ENCODE measurements at regions of chr6 and their contacts with region 1.

Region 1: DNA sequence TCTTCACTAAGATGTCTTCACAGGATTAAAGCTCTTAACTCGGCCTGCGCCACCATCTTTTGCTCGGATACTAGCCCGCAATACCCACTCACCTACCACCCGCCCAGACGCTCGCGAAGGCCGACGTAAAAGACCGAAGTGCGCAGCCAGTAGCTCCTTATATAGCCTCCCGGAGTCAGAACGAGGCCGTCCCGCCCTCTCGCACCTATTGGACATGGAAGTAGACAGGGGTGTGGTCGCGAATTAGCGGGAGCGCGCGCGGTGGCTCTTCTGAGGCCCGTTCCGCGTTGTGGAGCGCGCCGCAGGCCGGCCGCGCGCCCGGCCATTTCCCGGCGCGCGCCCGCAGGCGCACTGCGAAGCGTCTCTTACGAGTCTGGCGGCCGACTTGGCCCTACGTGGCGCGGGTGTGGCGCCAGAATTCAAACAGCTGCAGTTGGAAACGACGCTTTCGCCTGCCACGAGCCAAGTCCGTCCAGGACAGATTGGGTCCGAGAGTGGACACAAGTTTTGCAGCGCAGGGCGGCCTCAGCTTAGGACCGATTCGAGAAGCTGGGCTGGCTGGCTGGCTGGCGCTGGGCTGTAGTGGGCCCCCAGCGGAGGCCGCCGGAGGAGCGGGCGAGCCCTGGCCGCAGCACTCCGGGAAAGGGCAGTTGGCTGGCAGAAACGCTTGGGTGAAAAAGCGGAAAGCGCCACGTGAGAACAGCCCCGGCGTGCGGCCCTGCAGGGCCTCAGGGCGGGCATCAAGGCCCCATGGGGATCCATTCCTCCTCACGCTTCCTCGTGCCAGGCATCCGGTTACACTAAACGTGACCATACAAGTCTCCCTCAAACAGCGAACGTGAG is 36.1 kb upstream of the SYNCRIP start:
- DNase-seq: peak; percentile 97 to 100 (median 98)
- ATAC-seq: peak; percentile 87
- H3K4me3 ChIP-seq: peak overlapping the region; percentile 72
- H3K4me3 Mint-ChIP-seq: peak overlapping the region; percentile 98
- H3K27ac ChIP-seq: peak overlapping the region; percentile 90 to 94
- H3K27ac Mint-ChIP-seq: peak overlapping the region; percentile 97
- H3K4me1 ChIP-seq: peaks cover 20% of the 10 kb centered on the region
- H3K4me1 Mint-ChIP-seq: peaks cover 51% of the 10 kb centered on the region
- H3K27me3 ChIP-seq: no peaks in the 10 kb centered on the region
- H3K27me3 Mint-ChIP-seq: no peaks in the 10 kb centered on the region
- CTCF ChIP-seq: no peak

Region 2: GRCh38 chr6:85354761-85355618 is 323.8 kb before region 1 on chr6:
- CTCF ChIA-PET with region 1: no interaction called
- POLR2A ChIA-PET with region 1: no interaction called
- intact Hi-C with region 1: loop called in 1 of 2 experiments (anchors 10 kb)
- DNase-seq: peak; percentile 12 to 64 (median 35)
- ATAC-seq: peak; percentile 49
- H3K4me3 ChIP-seq: no peak overlapping the region
- H3K4me3 Mint-ChIP-seq: no peak overlapping the region
- H3K27ac ChIP-seq: no peak overlapping the region
- H3K27ac Mint-ChIP-seq: no peak overlapping the region
- H3K4me1 ChIP-seq: no peaks in the 10 kb centered on the region
- H3K4me1 Mint-ChIP-seq: no peaks in the 10 kb centered on the region
- H3K27me3 ChIP-seq: no peaks in the 10 kb centered on the region
- H3K27me3 Mint-ChIP-seq: no peaks in the 10 kb centered on the region
- CTCF ChIP-seq: peak; percentile 96

Region 3: DNA sequence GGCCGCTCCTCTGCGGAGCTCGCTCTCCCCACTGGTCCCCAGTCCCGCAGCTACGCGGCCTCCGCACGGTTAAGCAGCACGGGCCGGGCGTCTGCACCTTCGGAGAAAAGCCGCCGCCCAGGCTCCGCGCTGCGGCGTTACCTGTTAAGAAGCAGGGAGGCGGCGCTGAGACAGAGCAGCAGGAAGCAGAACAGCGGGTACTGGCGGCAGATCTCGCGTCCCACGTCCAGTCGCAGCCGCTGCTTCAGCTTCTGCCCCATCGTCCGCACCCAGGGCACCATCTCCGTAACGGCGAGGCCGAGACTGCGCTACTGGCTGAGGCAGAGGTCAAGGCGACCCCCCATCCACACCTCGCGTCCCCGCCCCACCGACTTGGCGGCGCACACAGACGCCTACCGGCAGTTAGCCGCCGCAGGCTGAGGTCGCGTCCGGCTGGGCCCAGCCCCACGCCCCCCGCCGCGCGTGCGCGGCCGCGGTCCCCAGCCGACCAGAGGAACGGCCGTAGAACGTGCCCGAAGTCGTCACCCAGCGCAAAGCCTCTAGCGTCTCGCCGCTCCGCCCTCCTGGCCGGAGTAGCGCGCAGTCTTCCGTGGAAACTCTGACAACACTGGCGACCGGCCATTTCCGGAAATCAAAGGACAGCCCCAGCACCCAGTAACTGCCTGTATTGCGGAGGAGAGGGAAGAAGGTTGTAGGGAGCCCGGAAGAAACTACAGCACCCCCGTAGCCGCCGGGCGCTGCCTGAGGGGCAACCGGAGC is 85.2 kb before region 1 on chr6 and contains the start of gene SNX14:
- CTCF ChIA-PET with region 1: interaction called, 7 read pairs
- POLR2A ChIA-PET with region 1: interaction called, 110 read pairs
- intact Hi-C with region 1: loop called (anchors 1 to 5 kb)
- DNase-seq: peak; percentile 56 to 89 (median 66)
- ATAC-seq: peak; percentile 72
- H3K4me3 ChIP-seq: peak within 1 kb of the TSS; percentile 86
- H3K4me3 Mint-ChIP-seq: peak within 1 kb of the TSS; percentile 95
- H3K27ac ChIP-seq: peak within 1 kb of the TSS; percentile 92 to 93
- H3K27ac Mint-ChIP-seq: peak within 1 kb of the TSS; percentile 85
- H3K4me1 ChIP-seq: peaks cover 25% of the 10 kb centered on the region
- H3K4me1 Mint-ChIP-seq: peaks cover 58% of the 10 kb centered on the region
- H3K27me3 ChIP-seq: no peaks in the 10 kb centered on the region
- H3K27me3 Mint-ChIP-seq: no peaks in the 10 kb centered on the region
- CTCF ChIP-seq: no peak
- total RNA-seq, gene SNX14: 30.8 to 31.5 TPM

Region 4: GRCh38 chr6:85620308-85620707 is 58.5 kb before region 1 on chr6:
- CTCF ChIA-PET with region 1: no interaction called
- POLR2A ChIA-PET with region 1: interaction called, 5 read pairs
- intact Hi-C with region 1: loop called in 1 of 2 experiments (anchors 10 kb)
- DNase-seq: no peak
- ATAC-seq: no peak
- H3K4me3 ChIP-seq: no peak overlapping the region
- H3K4me3 Mint-ChIP-seq: no peak overlapping the region
- H3K27ac ChIP-seq: no peak overlapping the region
- H3K27ac Mint-ChIP-seq: no peak overlapping the region
- H3K4me1 ChIP-seq: no peaks in the 10 kb centered on the region
- H3K4me1 Mint-ChIP-seq: peaks cover 19% of the 10 kb centered on the region
- H3K27me3 ChIP-seq: no peaks in the 10 kb centered on the region
- H3K27me3 Mint-ChIP-seq: no peaks in the 10 kb centered on the region
- CTCF ChIP-seq: no peak

Region 5: DNA sequence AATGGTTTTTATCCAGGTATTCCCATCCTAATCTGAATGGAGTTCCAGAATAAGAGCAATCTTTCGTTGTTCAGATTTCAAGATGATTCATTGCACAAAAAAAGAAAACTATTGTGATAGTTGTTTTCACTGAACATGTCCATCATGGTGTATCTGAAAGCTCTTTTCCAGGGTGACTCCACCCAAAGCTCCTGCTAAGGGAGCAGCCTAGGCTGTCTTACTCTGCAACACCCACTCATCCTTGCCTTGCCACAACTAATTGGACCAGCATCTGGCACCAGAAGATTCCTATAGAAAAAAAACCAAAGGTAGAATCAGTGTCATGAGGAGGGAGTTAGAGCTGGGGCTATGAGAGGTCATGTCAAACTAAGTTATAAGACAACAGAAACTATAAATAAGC is 28.2 kb before region 1 on chr6:
- CTCF ChIA-PET with region 1: interaction called, 8 read pairs
- POLR2A ChIA-PET with region 1: interaction called, 849 read pairs
- intact Hi-C with region 1: no loop called
- DNase-seq: no peak
- ATAC-seq: no peak
- H3K4me3 ChIP-seq: no peak overlapping the region
- H3K4me3 Mint-ChIP-seq: no peak overlapping the region
- H3K27ac ChIP-seq: no peak overlapping the region
- H3K27ac Mint-ChIP-seq: no peak overlapping the region
- H3K4me1 ChIP-seq: no peaks in the 10 kb centered on the region
- H3K4me1 Mint-ChIP-seq: peaks cover under 1% of the 10 kb centered on the region
- H3K27me3 ChIP-seq: no peaks in the 10 kb centered on the region
- H3K27me3 Mint-ChIP-seq: no peaks in the 10 kb centered on the region
- CTCF ChIP-seq: no peak

Region 6: DNA sequence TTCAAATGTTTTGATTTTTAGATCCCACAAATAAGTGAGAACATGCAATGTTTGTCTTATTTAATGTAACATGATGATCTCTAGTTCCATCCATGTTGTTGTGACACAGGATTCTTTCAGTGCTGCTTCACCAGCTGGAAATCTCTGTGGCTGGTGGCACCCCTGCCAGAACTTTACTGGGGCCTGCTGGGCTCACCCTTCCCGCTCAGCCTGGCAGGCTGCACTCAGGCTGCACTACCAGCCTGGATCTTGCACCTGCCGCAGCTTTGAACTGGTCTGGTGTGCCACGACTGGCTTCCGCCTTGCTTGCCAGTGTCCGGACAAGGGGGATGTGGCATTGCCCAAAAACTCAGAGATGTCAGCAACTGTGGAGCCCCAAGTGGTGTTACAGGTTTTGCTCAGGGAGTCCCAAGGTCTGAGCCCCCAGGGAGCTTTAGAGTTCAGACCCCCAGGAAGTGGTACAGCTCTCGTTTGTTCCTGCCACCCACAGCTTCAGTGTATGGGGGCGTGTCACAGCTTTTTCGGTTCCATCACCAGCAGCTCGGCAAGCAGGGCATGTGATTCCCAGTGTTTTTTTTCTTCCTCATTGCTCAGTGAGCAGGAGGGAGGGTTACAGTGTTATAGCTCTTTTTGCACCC is 36.2 kb after region 1 on chr6:
- CTCF ChIA-PET with region 1: no interaction called
- POLR2A ChIA-PET with region 1: no interaction called
- intact Hi-C with region 1: no loop called
- DNase-seq: no peak
- ATAC-seq: no peak
- H3K4me3 ChIP-seq: no peak overlapping the region
- H3K4me3 Mint-ChIP-seq: no peak overlapping the region
- H3K27ac ChIP-seq: no peak overlapping the region
- H3K27ac Mint-ChIP-seq: no peak overlapping the region
- H3K4me1 ChIP-seq: no peaks in the 10 kb centered on the region
- H3K4me1 Mint-ChIP-seq: no peaks in the 10 kb centered on the region
- H3K27me3 ChIP-seq: no peaks in the 10 kb centered on the region
- H3K27me3 Mint-ChIP-seq: peaks cover 4% of the 10 kb centered on the region
- CTCF ChIP-seq: no peak